ENCODE measurements at regions of chr7 and their contacts with region 1.

Region 1: GRCh38 chr7:100965723-100966541 is 3.4 kb upstream of the MUC12 start:
- DNase-seq: peak in 1 of 2 experiments; percentile 92
- H3K4me3 ChIP-seq: no peak overlapping the region
- H3K27ac ChIP-seq: no peak overlapping the region
- H3K4me1 ChIP-seq: no peaks in the 10 kb centered on the region
- H3K27me3 ChIP-seq: peaks cover 86% of the 10 kb centered on the region
- CTCF ChIP-seq: peak; percentile 46

Region 2: GRCh38 chr7:99949638-99950228 is 1016.2 kb before region 1 on chr7:
- CTCF ChIA-PET with region 1: interaction called, 10 read pairs
- POLR2A ChIA-PET with region 1: no interaction called
- intact Hi-C with region 1: no loop called
- DNase-seq: no peak
- H3K4me3 ChIP-seq: no peak overlapping the region
- H3K27ac ChIP-seq: no peak overlapping the region
- H3K4me1 ChIP-seq: no peaks in the 10 kb centered on the region
- H3K27me3 ChIP-seq: peaks cover 20% of the 10 kb centered on the region; the same call in 1 of the 2 replicates
- CTCF ChIP-seq: peak; percentile 45; the same call in 1 of the 2 replicates

Region 3: DNA sequence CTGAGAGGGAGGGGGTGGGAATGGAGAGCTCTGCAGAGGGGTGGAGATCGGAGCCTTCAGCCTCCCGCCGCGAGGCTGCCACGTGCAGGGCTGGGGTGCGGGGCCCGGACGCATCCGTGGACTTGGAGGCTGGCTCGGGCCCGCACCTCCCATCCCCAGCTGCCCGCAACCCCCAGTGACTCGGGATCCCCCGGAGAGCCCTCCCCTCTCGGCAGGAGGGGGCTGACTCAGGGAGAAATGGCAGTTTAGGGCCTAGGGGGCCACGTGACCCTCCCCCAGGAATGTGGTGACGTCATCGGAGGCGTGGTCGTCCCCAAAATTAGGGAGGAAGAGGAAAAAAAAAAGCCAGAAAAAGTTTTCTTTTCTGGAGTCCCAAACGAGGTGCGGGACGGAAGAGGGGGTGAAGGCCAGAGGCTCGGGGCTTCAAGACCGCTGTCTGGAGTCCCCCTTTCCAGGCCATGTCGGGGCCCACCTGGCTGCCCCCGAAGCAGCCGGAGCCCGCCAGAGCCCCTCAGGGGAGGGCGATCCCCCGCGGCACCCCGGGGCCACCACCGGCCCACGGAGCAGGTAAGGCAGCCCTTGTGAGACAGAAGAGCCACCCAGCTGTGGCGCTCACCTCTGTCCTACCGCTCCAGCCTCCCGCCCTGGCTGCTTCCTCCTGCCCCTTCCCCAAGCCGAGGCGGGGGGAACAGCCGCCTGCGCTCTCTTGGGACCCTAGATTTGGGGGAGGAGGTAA is 98.7 kb before region 1 on chr7 and contains the start of gene TRIP6:
- CTCF ChIA-PET with region 1: interaction called, 11 read pairs
- POLR2A ChIA-PET with region 1: no interaction called
- intact Hi-C with region 1: no loop called
- DNase-seq: peak; percentile 80 to 92
- H3K4me3 ChIP-seq: peak within 1 kb of the TSS; percentile 99
- H3K27ac ChIP-seq: peak within 1 kb of the TSS; percentile 68
- H3K4me1 ChIP-seq: peaks cover 18% of the 10 kb centered on the region
- H3K27me3 ChIP-seq: no peaks in the 10 kb centered on the region
- CTCF ChIP-seq: no peak
- total RNA-seq, gene TRIP6: 89.3 and 91.4 TPM in 2 replicates

Region 4: GRCh38 chr7:101058355-101058754 is 92.4 kb after region 1 on chr7:
- CTCF ChIA-PET with region 1: no interaction called
- POLR2A ChIA-PET with region 1: no interaction called
- intact Hi-C with region 1: loop called (anchors 2 kb)
- DNase-seq: peak in 1 of 2 experiments; percentile 58
- H3K4me3 ChIP-seq: no peak overlapping the region
- H3K27ac ChIP-seq: no peak overlapping the region
- H3K4me1 ChIP-seq: no peaks in the 10 kb centered on the region
- H3K27me3 ChIP-seq: peaks cover 61% of the 10 kb centered on the region
- CTCF ChIP-seq: no peak

Region 5: GRCh38 chr7:101077303-101078089 is 111.6 kb after region 1 on chr7:
- CTCF ChIA-PET with region 1: no interaction called
- POLR2A ChIA-PET with region 1: no interaction called
- intact Hi-C with region 1: loop called (anchors 5 kb)
- DNase-seq: peak; percentile 86 to 96
- H3K4me3 ChIP-seq: no peak overlapping the region
- H3K27ac ChIP-seq: no peak overlapping the region
- H3K4me1 ChIP-seq: peaks cover 25% of the 10 kb centered on the region
- H3K27me3 ChIP-seq: no peaks in the 10 kb centered on the region
- CTCF ChIP-seq: peak; percentile 92

Region 6: DNA sequence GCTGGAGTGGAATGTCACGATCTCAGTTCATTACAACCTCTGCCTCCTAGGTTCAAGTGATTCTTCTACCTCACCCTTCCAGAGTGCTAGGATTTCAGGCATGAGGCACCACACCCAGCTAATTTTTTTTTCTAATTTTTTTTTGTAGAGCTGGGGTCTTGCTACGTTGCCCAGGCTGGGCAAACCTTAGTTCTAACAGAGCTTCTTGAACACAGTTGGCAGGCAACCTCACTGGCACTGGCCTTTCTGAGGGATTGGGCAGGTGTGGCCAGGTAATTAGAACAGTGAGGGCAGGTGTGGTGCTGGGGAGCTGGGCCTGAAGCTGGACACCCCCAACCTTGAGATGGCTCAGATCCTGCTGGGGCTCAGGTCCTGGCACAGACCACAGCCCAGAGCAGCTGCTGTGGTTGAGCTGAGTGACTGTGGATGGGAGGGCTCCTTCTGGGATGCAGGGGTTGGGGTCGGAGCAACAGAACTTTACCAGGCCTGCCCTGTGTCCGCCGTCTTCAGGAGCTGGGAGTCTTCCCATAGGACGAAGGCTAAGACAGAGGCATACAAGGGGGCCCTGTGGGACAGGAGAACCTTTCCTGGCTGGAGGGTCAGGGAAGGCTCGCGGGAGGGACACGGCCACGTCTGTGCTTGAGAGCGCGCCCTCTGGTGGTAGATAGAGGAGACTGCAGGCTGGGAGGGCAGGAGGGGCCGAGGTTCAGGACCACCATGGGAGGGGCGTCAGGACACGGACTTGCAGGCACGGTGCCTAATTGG is 445.0 kb after region 1 on chr7:
- CTCF ChIA-PET with region 1: no interaction called
- POLR2A ChIA-PET with region 1: no interaction called
- intact Hi-C with region 1: no loop called
- DNase-seq: peak in 1 of 2 experiments; percentile 31
- H3K4me3 ChIP-seq: no peak overlapping the region
- H3K27ac ChIP-seq: no peak overlapping the region
- H3K4me1 ChIP-seq: no peaks in the 10 kb centered on the region
- H3K27me3 ChIP-seq: peaks cover 31% of the 10 kb centered on the region
- CTCF ChIP-seq: peak; percentile 86

Region 7: DNA sequence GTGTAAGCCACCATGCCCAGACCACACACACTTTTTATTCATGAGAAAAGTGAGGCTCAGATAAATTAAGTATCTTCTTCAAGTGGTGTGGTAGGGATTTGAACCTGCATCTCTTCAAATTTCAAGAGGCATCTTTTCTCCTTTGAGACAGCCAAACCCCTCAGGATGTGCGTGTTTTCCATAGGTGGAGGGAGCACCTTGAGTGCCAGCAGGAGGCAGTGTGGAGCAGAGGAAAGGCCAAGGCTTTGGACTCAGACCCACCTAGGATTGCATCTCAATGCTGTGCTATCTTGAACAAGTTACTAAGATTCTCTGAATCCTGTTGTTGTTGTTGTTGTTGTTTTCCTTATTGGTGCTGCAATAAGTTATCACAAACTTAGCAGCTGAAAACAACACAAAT is 703.4 kb after region 1 on chr7:
- CTCF ChIA-PET with region 1: no interaction called
- POLR2A ChIA-PET with region 1: no interaction called
- intact Hi-C with region 1: no loop called
- DNase-seq: no peak
- H3K4me3 ChIP-seq: no peak overlapping the region
- H3K27ac ChIP-seq: no peak overlapping the region
- H3K4me1 ChIP-seq: peaks cover 3% of the 10 kb centered on the region; the same call in 1 of the 2 replicates
- H3K27me3 ChIP-seq: no peaks in the 10 kb centered on the region
- CTCF ChIP-seq: peak; percentile 27; the same call in 1 of the 2 replicates

Measured in PC-9 (cell line).